ENCODE measurements at regions of chr18 and their contacts with region 1.

Region 1: GRCh38 chr18:58407649-58408407 is 221.1 kb downstream of the ALPK2 start:
- DNase-seq: peak; percentile 100
- ATAC-seq: peak; percentile 74
- H3K4me3 ChIP-seq: peak overlapping the region in 1 of 3 experiments; percentile 47; a peak in 1 of 6 replicates
- H3K27ac ChIP-seq: peak overlapping the region; percentile 98
- H3K4me1 ChIP-seq: peaks cover 99% of the 10 kb centered on the region
- H3K27me3 ChIP-seq: no peaks in the 10 kb centered on the region
- CTCF ChIP-seq: peak; percentile 59
- EP300 ChIP-seq: peak; percentile 95 to 100
- POLR2A ChIP-seq: peak in 1 of 2 experiments; percentile 51; a peak in 1 of 4 replicates
- RAD21 ChIP-seq: peak; percentile 66

Region 2: GRCh38 chr18:58314284-58314683 is 93.5 kb before region 1 on chr18:
- CTCF ChIA-PET with region 1: no interaction called
- POLR2A ChIA-PET with region 1: no interaction called
- in situ Hi-C with region 1: no loop called
- intact Hi-C with region 1: no loop called
- DNase-seq: peak; percentile 65
- ATAC-seq: peak; percentile 39; the same call in 2 of the 3 replicates
- H3K4me3 ChIP-seq: no peak overlapping the region
- H3K27ac ChIP-seq: peak overlapping the region; percentile 78
- H3K4me1 ChIP-seq: peaks cover 83% of the 10 kb centered on the region
- H3K27me3 ChIP-seq: no peaks in the 10 kb centered on the region; a peak in 1 of 5 replicates
- CTCF ChIP-seq: no peak
- EP300 ChIP-seq: no peak
- POLR2A ChIP-seq: no peak
- RAD21 ChIP-seq: no peak

Region 3: GRCh38 chr18:58484989-58485981 is 77.5 kb after region 1 on chr18:
- CTCF ChIA-PET with region 1: no interaction called
- POLR2A ChIA-PET with region 1: interaction called, 19 read pairs
- in situ Hi-C with region 1: loop called (anchors 5 kb)
- intact Hi-C with region 1: no loop called
- DNase-seq: no peak
- ATAC-seq: peak; percentile 40
- H3K4me3 ChIP-seq: no peak overlapping the region
- H3K27ac ChIP-seq: peak overlapping the region; percentile 55
- H3K4me1 ChIP-seq: peaks cover 81% of the 10 kb centered on the region
- H3K27me3 ChIP-seq: no peaks in the 10 kb centered on the region
- CTCF ChIP-seq: no peak
- EP300 ChIP-seq: no peak
- POLR2A ChIP-seq: no peak
- RAD21 ChIP-seq: no peak

Region 4: DNA sequence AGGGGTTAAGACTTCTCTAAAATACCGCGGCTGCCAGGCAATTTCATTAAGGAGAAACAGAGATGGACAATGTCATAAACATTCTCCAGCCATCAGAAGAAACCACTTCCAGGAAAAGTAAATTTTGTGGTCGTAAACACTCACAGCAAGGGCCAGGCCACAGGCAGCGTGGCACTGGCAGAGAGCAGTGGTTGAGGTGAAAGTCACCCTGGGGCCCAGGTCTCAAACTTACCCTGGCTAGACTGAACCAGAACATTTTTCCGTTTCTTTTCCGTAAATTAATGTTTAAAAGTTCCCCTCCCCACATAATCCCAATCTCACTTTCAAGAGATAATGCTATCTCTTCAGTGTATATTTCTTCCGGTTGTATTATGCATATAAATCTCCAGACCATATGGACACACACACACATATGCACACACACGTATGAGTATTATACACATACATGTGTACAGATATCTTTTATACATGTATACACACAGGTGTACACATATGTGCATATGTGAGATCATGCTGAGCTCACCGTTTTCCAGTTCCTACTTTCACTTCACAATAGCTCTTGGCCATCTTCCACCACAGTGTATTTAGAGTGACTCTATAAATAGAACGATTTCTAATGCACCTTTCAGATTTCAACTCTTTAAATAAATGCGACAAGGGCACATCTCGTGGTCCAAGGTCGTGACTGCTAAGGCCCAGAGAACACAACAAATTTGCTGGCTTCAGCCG is 353.6 kb after region 1 on chr18:
- CTCF ChIA-PET with region 1: no interaction called
- POLR2A ChIA-PET with region 1: no interaction called
- in situ Hi-C with region 1: loop called (anchors 5 kb)
- intact Hi-C with region 1: no loop called
- DNase-seq: no peak
- ATAC-seq: no peak
- H3K4me3 ChIP-seq: no peak overlapping the region
- H3K27ac ChIP-seq: no peak overlapping the region
- H3K4me1 ChIP-seq: peaks cover 45% of the 10 kb centered on the region
- H3K27me3 ChIP-seq: no peaks in the 10 kb centered on the region; a peak in 1 of 5 replicates
- CTCF ChIP-seq: no peak
- EP300 ChIP-seq: no peak
- POLR2A ChIP-seq: no peak
- RAD21 ChIP-seq: no peak

Measured in HepG2 (cell line).